ENCODE measurements at regions of chr20 and their contacts with region 1.

Region 1: DNA sequence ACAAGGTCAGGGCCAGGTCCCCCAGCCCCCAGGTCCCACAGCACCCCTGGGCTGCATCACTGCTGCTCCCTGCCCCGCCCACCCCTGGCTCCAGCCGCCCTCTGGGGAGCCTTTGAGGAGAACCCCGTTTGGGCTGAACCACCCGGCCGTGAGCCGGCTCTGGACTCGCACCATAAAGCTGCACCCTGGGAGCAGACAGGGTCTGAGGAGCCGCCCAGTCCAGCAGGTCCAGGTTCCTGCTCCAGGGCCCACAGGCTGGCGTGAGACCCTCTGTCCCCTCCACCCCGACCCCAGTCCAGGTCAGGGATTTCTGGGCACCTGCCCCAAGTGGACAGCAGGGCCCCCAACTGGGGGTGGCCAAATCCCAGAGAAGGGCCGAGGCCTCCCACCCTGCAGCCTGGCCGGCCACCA is 8.3 kb downstream of the CHRNA4 start:
- DNase-seq: no peak
- H3K4me3 Mint-ChIP-seq: no peak overlapping the region
- H3K27ac Mint-ChIP-seq: no peak overlapping the region
- H3K4me1 Mint-ChIP-seq: no peaks in the 10 kb centered on the region
- H3K27me3 Mint-ChIP-seq: peaks cover 19% of the 10 kb centered on the region
- CTCF ChIP-seq: no peak

Region 2: DNA sequence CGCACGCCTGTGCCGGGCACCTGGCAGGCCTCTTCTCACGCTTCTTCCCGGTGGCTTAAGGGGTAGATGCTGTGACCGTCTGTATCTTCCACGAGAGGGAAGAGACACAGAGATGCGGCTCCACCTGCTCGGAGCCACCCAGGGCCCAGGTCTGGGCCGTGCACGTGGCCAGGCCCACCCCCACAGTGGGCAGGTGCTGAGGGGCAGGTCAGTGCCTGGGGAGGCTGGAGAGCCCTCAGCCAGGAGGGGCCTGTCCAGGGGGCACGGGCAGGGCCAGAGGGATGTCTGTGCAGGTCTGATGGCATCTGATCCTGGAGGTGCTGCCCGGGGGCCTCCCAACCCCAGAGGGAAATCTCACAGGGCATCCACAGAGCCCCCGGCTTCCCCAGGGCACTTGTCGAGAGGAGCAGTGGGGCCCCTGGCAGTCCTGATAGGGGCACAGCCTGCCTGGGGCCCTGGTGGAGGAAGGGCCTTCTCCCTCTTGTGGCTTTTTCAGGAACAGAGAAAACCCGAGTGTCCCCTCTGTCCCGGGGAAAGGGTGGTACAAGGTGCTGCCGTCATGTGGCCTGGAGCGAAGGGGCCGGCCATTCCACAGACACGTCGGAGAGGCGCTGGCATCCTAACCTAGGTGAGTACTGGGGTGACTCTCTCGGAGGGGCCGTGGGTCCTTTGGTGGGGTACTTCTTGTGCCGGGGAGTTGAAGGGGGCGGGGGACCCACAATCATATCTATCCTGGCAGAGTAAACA is 58.5 kb after region 1 on chr20:
- CTCF ChIA-PET with region 1: interaction called, 10 read pairs
- intact Hi-C with region 1: no loop called
- DNase-seq: no peak
- H3K4me3 Mint-ChIP-seq: no peak overlapping the region
- H3K27ac Mint-ChIP-seq: no peak overlapping the region
- H3K4me1 Mint-ChIP-seq: no peaks in the 10 kb centered on the region
- H3K27me3 Mint-ChIP-seq: peaks cover 65% of the 10 kb centered on the region
- CTCF ChIP-seq: no peak